Naive thymus-derived CD4-positive, alpha-beta T cell (primary cell): ENCODE measurements at regions of chr19 and their contacts with region 1.

Region 1: GRCh38 chr19:40974633-40975037 is 16.4 kb upstream of the CYP2B6 start:
- DNase-seq: peak; percentile 54 to 84 (median 76)
- ATAC-seq: peak; percentile 87
- H3K4me3 ChIP-seq: no peak overlapping the region
- H3K4me3 Mint-ChIP-seq: peak overlapping the region in 1 of 10 donors; percentile 45
- H3K27ac ChIP-seq: no peak overlapping the region
- H3K27ac Mint-ChIP-seq: peak overlapping the region in 3 of 9 donors; percentile 53 to 74 (median 63)
- H3K4me1 ChIP-seq: peaks cover 16 to 19% of the 10 kb centered on the region in 2 donors
- H3K4me1 Mint-ChIP-seq: peaks cover 13 to 53% (median 27%) of the 10 kb centered on the region in 7 donors
- H3K27me3 ChIP-seq: no peaks in the 10 kb centered on the region
- H3K27me3 Mint-ChIP-seq: peaks cover 2 to 38% (median 3%) of the 10 kb centered on the region in 5 donors

Region 2: GRCh38 chr19:40831502-40832442 is 142.9 kb before region 1 on chr19:
- CTCF ChIA-PET with region 1: no interaction called
- POLR2A ChIA-PET with region 1: no interaction called
- intact Hi-C with region 1: loop called in 1 of 2 experiments (anchors 1 kb)
- DNase-seq: no peak
- ATAC-seq: no peak
- H3K4me3 ChIP-seq: no peak overlapping the region
- H3K4me3 Mint-ChIP-seq: peak overlapping the region in 1 of 10 donors; percentile 15
- H3K27ac ChIP-seq: no peak overlapping the region
- H3K27ac Mint-ChIP-seq: peak overlapping the region in 6 of 9 donors; percentile 59 to 85 (median 72)
- H3K4me1 ChIP-seq: peaks cover 5 to 11% of the 10 kb centered on the region in 2 donors
- H3K4me1 Mint-ChIP-seq: peaks cover 11 to 38% (median 27%) of the 10 kb centered on the region in 7 donors
- H3K27me3 ChIP-seq: no peaks in the 10 kb centered on the region
- H3K27me3 Mint-ChIP-seq: no peaks in the 10 kb centered on the region

Region 3: GRCh38 chr19:41144403-41144802 is 169.8 kb after region 1 on chr19:
- CTCF ChIA-PET with region 1: interaction called, 10 read pairs
- POLR2A ChIA-PET with region 1: no interaction called
- intact Hi-C with region 1: loop called (anchors 1 to 2 kb)
- DNase-seq: peak; percentile 68 to 88 (median 84)
- ATAC-seq: peak; percentile 96
- H3K4me3 ChIP-seq: no peak overlapping the region
- H3K4me3 Mint-ChIP-seq: no peak overlapping the region
- H3K27ac ChIP-seq: no peak overlapping the region
- H3K27ac Mint-ChIP-seq: peak overlapping the region in 4 of 9 donors; percentile 44 to 78 (median 58)
- H3K4me1 ChIP-seq: no peaks in the 10 kb centered on the region
- H3K4me1 Mint-ChIP-seq: peaks cover 0 to 3% (median 0%) of the 10 kb centered on the region in 7 donors
- H3K27me3 ChIP-seq: no peaks in the 10 kb centered on the region
- H3K27me3 Mint-ChIP-seq: peaks cover 0 to 29% (median 15%) of the 10 kb centered on the region in 5 donors